Activated T-helper 2 cell treated with anti-CD3 and anti-CD28 coated beads, Interferon-gamma antibody, Interleukin-2, Interleukin-4, amounts not matched to agents 10 μg/mL and 5 μg/mL and 100 μg/mL, durations not matched to agents 14 hours and 24 hours and 36 hours (primary cell): ENCODE measurements at regions of chr4 and their contacts with region 1.

Region 1: GRCh38 chr4:41216294-41217019 is 2.1 kb upstream of the APBB2 start:
- DNase-seq: peak; percentile 37
- H3K4me3 Mint-ChIP-seq: peak overlapping the region; percentile 74
- H3K27ac Mint-ChIP-seq: peak overlapping the region; percentile 54
- H3K4me1 Mint-ChIP-seq: peaks cover 23% of the 10 kb centered on the region
- H3K27me3 Mint-ChIP-seq: peaks cover 68% of the 10 kb centered on the region

Region 2: DNA sequence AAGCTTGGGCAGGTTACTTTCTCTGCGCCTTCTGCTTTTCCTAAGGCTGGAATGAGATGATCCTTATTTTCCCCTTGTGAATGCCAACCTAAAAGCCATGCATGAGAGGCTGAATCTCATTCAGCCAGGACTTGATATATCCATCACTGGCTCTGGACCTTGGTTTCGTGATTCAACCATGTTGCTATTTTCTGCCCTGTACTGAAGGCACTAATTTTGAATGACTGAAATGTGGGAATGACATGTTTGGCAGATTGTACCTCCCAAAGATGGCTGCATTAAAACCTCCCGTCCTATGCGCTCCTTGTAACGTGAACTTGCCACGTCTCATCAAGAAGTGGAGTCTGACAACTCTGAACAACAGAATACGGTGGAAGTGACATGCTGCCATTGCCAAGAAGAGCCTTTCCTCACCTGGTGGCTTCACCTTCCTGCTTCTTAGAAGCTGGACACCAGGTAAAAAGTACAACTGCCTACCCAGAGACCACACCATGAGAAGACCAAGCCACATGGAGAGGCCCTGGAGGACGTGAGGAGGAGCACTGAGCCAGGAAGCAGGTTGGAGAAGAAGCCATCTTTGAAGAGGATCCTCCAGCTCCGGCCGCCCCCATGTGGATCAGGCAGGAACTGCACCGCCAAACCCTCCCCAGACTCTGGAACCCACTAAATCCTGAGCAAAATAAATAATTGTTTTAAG is 292.2 kb before region 1 on chr4:
- intact Hi-C with region 1: loop called (anchors 2 kb)
- DNase-seq: peak; percentile 58
- H3K4me3 Mint-ChIP-seq: no peak overlapping the region
- H3K27ac Mint-ChIP-seq: peak overlapping the region; percentile 80
- H3K4me1 Mint-ChIP-seq: peaks cover 13% of the 10 kb centered on the region
- H3K27me3 Mint-ChIP-seq: peaks cover 15% of the 10 kb centered on the region

Region 3: DNA sequence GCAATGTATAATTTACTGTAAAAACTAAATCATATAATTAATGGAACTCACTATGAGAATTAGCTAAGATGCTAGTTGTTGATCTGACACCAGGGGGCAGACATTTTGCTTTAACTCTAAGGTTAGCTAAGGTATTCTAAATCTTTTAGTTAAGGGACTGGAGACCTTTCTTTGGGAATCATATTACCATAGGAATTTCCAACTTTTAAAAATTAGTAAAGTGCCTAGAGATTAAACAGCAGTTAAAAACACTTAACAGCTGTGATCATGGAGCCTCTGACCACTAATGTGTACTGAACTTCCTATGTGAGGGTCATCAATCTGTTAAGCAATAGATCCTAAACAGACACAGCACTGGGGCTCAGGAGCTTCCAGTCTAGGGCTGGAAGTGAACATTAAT is 240.1 kb before region 1 on chr4:
- intact Hi-C with region 1: loop called (anchors 1 kb)
- DNase-seq: no peak
- H3K4me3 Mint-ChIP-seq: no peak overlapping the region
- H3K27ac Mint-ChIP-seq: no peak overlapping the region
- H3K4me1 Mint-ChIP-seq: no peaks in the 10 kb centered on the region
- H3K27me3 Mint-ChIP-seq: no peaks in the 10 kb centered on the region